Adrenal gland (tissue), 19 donors: ENCODE measurements at regions of chr10 and their contacts with region 1.

Region 1: DNA sequence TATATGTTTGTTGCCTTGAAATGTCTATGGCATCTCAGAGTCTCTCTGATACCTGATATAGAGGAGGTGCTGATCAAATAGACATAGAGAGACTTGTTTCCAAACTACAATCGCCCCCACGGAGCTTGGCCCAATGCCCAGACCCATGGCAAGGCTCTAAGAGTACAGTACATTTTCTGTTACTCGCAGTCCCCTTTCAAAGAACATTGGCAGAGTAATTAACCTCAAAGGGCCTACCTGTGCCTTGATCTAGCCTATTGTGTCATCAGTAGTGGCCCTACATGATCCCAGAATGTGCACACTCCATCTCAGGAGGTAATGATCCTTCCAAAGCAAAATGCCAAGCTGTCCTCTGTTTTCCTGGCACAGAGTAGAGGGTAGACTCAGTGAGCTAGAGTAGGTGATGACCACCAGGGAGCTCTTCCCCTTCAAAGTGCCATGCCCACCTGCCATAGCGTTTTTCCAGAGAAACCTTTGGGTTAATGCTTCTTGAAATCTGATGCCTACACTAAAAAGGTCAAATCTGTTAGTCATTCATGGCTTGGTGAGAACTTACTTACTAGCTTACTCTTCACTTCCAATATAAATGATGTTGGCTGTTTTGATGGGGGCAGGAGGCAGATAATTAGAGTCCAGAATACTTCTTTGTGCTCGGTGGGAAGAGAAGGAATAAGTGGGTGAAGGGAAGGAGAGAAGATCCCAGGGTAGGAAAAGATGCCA is 41.2 kb upstream of the ACSL5 start:
- DNase-seq: no peak
- H3K4me3 ChIP-seq: no peak overlapping the region
- H3K27ac ChIP-seq: no peak overlapping the region
- H3K4me1 ChIP-seq: no peaks in the 10 kb centered on the region
- H3K27me3 ChIP-seq: no peaks in the 10 kb centered on the region
- CTCF ChIP-seq: no peak
- POLR2A ChIP-seq: no peak

Region 2: GRCh38 chr10:112429147-112429546 is 96.5 kb after region 1 on chr10:
- intact Hi-C with region 1: loop called in 1 of 2 experiments (anchors 10 kb)
- DNase-seq: no peak
- H3K4me3 ChIP-seq: no peak overlapping the region
- H3K27ac ChIP-seq: no peak overlapping the region
- H3K4me1 ChIP-seq: no peaks in the 10 kb centered on the region
- H3K27me3 ChIP-seq: no peaks in the 10 kb centered on the region
- CTCF ChIP-seq: no peak
- POLR2A ChIP-seq: no peak

Region 3: DNA sequence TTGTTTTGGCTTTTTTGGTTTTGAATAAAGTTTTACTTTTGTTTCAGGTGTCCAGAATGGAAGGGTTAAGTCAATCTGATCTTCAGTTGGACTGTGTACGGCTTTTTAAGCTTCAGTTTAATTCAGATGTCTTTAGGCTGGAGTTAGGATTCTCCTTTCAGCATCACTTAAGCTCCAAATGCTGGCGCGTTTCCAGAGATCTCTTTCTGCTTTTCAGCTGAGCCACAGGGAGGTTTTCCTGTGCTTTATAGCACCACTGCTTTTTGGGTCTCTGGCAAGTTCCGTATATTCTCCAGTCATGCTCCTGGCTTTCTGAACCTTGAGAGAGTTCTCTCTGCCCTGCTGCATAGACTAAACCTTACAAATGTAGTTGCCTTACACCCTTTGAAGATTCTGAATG is 174.4 kb after region 1 on chr10:
- intact Hi-C with region 1: no loop called
- DNase-seq: no peak
- H3K4me3 ChIP-seq: no peak overlapping the region
- H3K27ac ChIP-seq: no peak overlapping the region
- H3K4me1 ChIP-seq: no peaks in the 10 kb centered on the region
- H3K27me3 ChIP-seq: no peaks in the 10 kb centered on the region
- CTCF ChIP-seq: no peak
- POLR2A ChIP-seq: no peak